Mammary epithelial cell (primary cell): ENCODE measurements at regions of chr22 and their contacts with region 1.

Region 1: GRCh38 chr22:35627264-35628041 is 10.3 kb upstream of the MB start:
- DNase-seq: peak; percentile 82
- H3K4me3 ChIP-seq: peak overlapping the region; percentile 30 to 52 (median 51)
- H3K27ac ChIP-seq: peak overlapping the region; percentile 75
- H3K4me1 ChIP-seq: peaks cover 26% of the 10 kb centered on the region
- H3K27me3 ChIP-seq: no peaks in the 10 kb centered on the region
- CTCF ChIP-seq: peak; percentile 35 to 80

Region 2: GRCh38 chr22:35350539-35351503 is 276.6 kb before region 1 on chr22:
- CTCF ChIA-PET with region 1: no interaction called
- dilution Hi-C with region 1: no loop called
- in situ Hi-C with region 1: no loop called
- intact Hi-C with region 1: loop called (anchors 1 kb)
- DNase-seq: peak; percentile 84
- H3K4me3 ChIP-seq: peak overlapping the region; percentile 50 to 52 (median 51)
- H3K27ac ChIP-seq: peak overlapping the region; percentile 47
- H3K4me1 ChIP-seq: peaks cover 8% of the 10 kb centered on the region
- H3K27me3 ChIP-seq: no peaks in the 10 kb centered on the region
- CTCF ChIP-seq: peak; percentile 71 to 82

Region 3: GRCh38 chr22:35498026-35498800 is 129.2 kb before region 1 on chr22:
- CTCF ChIA-PET with region 1: interaction called, 12 read pairs
- dilution Hi-C with region 1: no loop called
- in situ Hi-C with region 1: no loop called
- intact Hi-C with region 1: no loop called
- DNase-seq: no peak
- H3K4me3 ChIP-seq: no peak overlapping the region
- H3K27ac ChIP-seq: no peak overlapping the region
- H3K4me1 ChIP-seq: no peaks in the 10 kb centered on the region
- H3K27me3 ChIP-seq: no peaks in the 10 kb centered on the region
- CTCF ChIP-seq: no peak

Region 4: DNA sequence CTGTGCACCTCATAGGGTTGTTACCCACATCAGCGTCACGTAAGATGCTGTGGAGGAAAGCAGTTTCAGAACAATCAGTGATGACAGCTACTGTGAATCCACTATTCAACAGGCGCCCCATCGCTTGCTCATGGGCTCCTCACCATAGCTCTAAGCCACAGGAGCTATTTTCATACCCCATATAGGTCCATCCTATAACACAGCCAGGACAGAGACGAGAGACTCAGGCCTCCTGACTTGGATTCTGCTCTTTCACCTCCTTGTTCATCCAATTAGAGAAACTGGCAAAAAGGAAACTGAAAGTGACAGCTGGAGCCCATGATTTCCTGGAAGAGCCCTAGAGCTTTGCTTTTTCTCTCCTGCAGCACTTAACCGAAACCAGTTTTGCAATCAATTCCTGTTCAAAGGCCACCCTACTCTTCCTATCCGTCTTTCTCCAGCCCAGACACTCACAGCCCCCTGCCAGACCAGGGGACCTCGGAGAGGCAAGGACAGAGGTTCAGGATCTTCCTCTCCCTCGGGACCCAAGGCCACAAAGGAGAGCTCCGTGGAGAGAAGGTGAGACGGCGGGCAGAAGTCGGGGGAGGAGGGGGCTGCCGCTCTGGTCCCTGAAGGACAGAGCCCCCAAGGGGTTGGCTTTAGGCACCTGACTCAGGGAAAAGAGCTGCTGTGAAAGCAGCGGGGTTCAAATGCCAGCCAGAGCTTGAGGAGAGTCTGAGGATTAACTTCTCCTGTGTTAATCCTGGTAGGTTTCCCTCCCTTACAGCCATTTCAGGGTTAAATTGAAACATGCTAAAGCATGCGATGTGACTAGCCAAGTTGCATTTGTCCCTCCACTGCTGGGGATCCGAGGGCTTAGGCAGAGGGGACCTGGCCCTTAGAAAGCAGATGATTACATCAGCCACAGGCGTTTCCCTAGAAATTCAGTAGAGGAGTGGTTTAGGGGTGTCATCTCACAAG is 20.9 kb after region 1 on chr22 and contains the start of gene APOL6:
- CTCF ChIA-PET with region 1: no interaction called
- dilution Hi-C with region 1: no loop called
- in situ Hi-C with region 1: no loop called
- intact Hi-C with region 1: loop called (anchors 1 kb)
- DNase-seq: peak; percentile 77
- H3K4me3 ChIP-seq: peak within 1 kb of the TSS; percentile 55 to 60 (median 58)
- H3K27ac ChIP-seq: peak within 1 kb of the TSS; percentile 87
- H3K4me1 ChIP-seq: peaks cover 25% of the 10 kb centered on the region
- H3K27me3 ChIP-seq: no peaks in the 10 kb centered on the region
- CTCF ChIP-seq: no peak
- total RNA-seq, gene APOL6: 10.6 to 21.5 TPM

Region 5: DNA sequence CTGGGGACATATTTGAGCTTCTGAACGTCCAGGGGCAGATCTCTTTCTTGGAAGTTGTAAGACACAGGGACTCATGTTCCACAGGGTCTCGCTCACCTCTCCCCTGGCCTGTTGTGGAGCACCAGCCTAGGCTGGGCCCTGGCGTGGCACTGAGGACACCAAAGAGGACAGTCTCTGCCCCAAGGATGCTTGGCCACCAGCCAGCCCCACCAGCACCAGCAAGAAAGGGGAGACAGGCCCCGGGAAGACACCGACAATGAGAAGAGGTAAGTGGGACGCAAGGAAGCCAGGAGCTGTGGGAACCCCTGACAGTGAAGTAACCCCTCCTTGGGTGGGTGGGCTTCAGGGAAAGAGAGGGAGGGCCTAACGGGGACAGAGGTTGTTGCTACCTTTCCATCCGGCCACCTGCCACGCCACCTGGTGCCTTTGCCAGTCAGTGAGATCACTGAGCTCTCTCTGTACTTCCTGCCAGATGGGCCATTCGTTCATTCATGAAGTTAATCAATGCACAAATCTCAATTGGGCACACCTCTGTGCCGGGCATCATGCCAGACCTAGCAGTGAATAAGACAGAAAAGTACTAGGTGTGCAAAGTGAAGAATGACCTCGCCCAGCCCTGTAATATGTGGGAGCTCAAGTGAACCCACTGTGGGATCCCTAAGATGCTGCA is 101.3 kb after region 1 on chr22:
- CTCF ChIA-PET with region 1: no interaction called
- dilution Hi-C with region 1: no loop called
- in situ Hi-C with region 1: no loop called
- intact Hi-C with region 1: no loop called
- DNase-seq: peak; percentile 73
- H3K4me3 ChIP-seq: no peak overlapping the region
- H3K27ac ChIP-seq: no peak overlapping the region
- H3K4me1 ChIP-seq: peaks cover 14% of the 10 kb centered on the region
- H3K27me3 ChIP-seq: no peaks in the 10 kb centered on the region
- CTCF ChIP-seq: peak in 1 of 2 donors; percentile 25

Region 6: DNA sequence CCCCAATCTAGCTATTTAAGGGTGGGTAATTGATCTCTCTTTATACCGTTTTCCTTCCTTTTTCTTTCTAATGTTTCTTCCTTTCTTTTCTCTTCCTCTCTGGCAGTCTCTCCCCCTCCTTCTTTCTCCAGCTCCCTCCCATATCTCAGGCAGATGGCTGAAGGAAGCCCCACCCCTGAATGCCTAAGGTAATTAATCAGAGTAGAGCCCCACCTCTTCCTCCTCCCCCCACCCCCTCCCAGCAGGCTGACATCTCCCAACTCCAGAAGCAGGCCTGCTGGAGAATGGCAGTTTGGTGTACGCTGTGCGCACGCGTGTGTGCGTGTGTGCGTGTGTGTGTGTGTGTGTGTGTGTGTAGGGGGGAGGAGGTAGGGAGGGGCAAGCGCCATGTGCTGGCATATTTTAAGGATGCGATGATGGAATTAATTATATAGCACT is 212.9 kb after region 1 on chr22:
- CTCF ChIA-PET with region 1: no interaction called
- dilution Hi-C with region 1: no loop called
- in situ Hi-C with region 1: loop called in 1 of 2 experiments (anchors 25 kb)
- intact Hi-C with region 1: loop called (anchors 1 kb)
- DNase-seq: peak; percentile 98
- H3K4me3 ChIP-seq: peak overlapping the region; percentile 65 to 83 (median 83)
- H3K27ac ChIP-seq: peak overlapping the region; percentile 82
- H3K4me1 ChIP-seq: peaks cover 22% of the 10 kb centered on the region
- H3K27me3 ChIP-seq: no peaks in the 10 kb centered on the region
- CTCF ChIP-seq: no peak

Region 7: GRCh38 chr22:36123673-36124630 is 496.5 kb after region 1 on chr22:
- CTCF ChIA-PET with region 1: interaction called, 6 read pairs
- dilution Hi-C with region 1: no loop called
- in situ Hi-C with region 1: loop called (anchors 10 kb)
- intact Hi-C with region 1: loop called (anchors 1 kb)
- DNase-seq: peak; percentile 88
- H3K4me3 ChIP-seq: peak overlapping the region in 1 of 3 experiments; percentile 45
- H3K27ac ChIP-seq: peak overlapping the region; percentile 23
- H3K4me1 ChIP-seq: no peaks in the 10 kb centered on the region
- H3K27me3 ChIP-seq: no peaks in the 10 kb centered on the region
- CTCF ChIP-seq: peak; percentile 91 to 99